ENCODE measurements at regions of chr5 and their contacts with region 1.

Region 1: GRCh38 chr5:172707285-172708182 is 63.5 kb downstream of the DUSP1 start:
- DNase-seq: peak; percentile 62
- H3K4me3 ChIP-seq: no peak overlapping the region
- H3K27ac ChIP-seq: no peak overlapping the region
- H3K4me1 ChIP-seq: no peaks in the 10 kb centered on the region
- H3K27me3 ChIP-seq: no peaks in the 10 kb centered on the region
- CTCF ChIP-seq: peak; percentile 61 to 64
- POLR2A ChIP-seq: no peak

Region 2: GRCh38 chr5:172697123-172698121 is 10.1 kb before region 1 on chr5:
- CTCF ChIA-PET with region 1: interaction called, 26 read pairs
- POLR2A ChIA-PET with region 1: no interaction called
- dilution Hi-C with region 1: no loop called
- intact Hi-C with region 1: no loop called
- DNase-seq: peak; percentile 82
- H3K4me3 ChIP-seq: peak overlapping the region; percentile 8 to 47 (median 36)
- H3K27ac ChIP-seq: no peak overlapping the region
- H3K4me1 ChIP-seq: peaks cover 5% of the 10 kb centered on the region
- H3K27me3 ChIP-seq: peaks cover 6 to 11% of the 10 kb centered on the region in 2 experiments
- CTCF ChIP-seq: peak; percentile 87 to 91
- POLR2A ChIP-seq: no peak

Region 3: GRCh38 chr5:173204185-173204979 is 496.8 kb after region 1 on chr5:
- CTCF ChIA-PET with region 1: interaction called, 4 read pairs
- POLR2A ChIA-PET with region 1: no interaction called
- dilution Hi-C with region 1: no loop called
- intact Hi-C with region 1: loop called (anchors 2 kb)
- DNase-seq: peak; percentile 36
- H3K4me3 ChIP-seq: no peak overlapping the region
- H3K27ac ChIP-seq: no peak overlapping the region
- H3K4me1 ChIP-seq: no peaks in the 10 kb centered on the region
- H3K27me3 ChIP-seq: peaks cover 6 to 9% of the 10 kb centered on the region in 2 experiments
- CTCF ChIP-seq: peak; percentile 31 to 33
- POLR2A ChIP-seq: no peak

Region 4: DNA sequence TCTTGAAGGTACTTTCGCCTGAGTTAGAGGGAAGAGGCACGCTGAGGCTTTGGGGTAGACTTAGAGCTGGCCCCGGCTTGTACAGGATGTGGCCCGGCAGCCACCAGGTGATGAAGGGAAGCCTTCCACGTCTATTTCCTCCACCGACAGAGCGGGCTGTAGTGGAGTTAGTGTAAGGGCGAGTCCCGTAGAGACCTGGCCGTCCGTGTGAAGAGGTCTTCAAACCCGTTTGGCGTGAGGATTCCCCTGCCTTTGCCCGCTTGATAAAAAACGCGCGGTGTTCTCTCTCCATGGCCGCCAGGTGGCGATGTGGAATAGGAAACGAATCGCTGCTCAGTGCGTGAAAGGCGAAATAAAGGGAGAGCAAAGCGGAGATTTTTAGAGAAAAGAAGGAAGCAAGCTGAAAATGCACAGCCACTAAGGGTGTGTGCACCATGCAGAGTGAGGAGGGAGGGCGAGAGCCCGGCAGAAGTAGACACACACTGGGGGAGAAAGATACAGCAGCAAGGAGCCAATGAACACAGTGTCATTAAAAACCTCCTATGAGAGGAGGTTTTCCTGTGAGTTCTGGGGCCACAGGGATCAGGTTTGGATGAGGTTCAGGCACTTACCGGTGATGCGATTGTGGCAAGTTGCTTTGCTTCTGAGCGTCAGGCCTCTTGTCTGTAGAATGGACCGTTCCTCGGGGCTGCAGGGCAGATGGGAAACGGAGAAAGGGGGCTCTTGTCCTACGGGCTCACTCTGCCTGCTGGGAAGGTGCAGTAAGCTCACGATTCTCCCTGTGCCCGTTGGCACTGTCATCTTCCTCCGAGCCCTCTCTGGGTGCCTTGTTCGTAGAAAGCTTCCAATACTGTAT is 586.5 kb after region 1 on chr5:
- CTCF ChIA-PET with region 1: interaction called, 11 read pairs
- POLR2A ChIA-PET with region 1: no interaction called
- dilution Hi-C with region 1: no loop called
- intact Hi-C with region 1: no loop called
- DNase-seq: peak; percentile 75
- H3K4me3 ChIP-seq: no peak overlapping the region
- H3K27ac ChIP-seq: no peak overlapping the region
- H3K4me1 ChIP-seq: peaks cover 22% of the 10 kb centered on the region
- H3K27me3 ChIP-seq: no peaks in the 10 kb centered on the region
- CTCF ChIP-seq: peak; percentile 77 to 85
- POLR2A ChIP-seq: no peak

Region 5: GRCh38 chr5:173581408-173582215 is 874.1 kb after region 1 on chr5:
- CTCF ChIA-PET with region 1: interaction called, 20 read pairs
- POLR2A ChIA-PET with region 1: no interaction called
- dilution Hi-C with region 1: no loop called
- intact Hi-C with region 1: loop called (anchors 1 kb)
- DNase-seq: peak; percentile 33
- H3K4me3 ChIP-seq: no peak overlapping the region
- H3K27ac ChIP-seq: no peak overlapping the region
- H3K4me1 ChIP-seq: no peaks in the 10 kb centered on the region
- H3K27me3 ChIP-seq: peaks cover 2 to 6% of the 10 kb centered on the region in 2 experiments
- CTCF ChIP-seq: peak; percentile 75 to 87
- POLR2A ChIP-seq: no peak